ENCODE measurements at regions of chr11 and their contacts with region 1.

Region 1: GRCh38 chr11:9613118-9613829 is 39.8 kb downstream of the WEE1 start:
- DNase-seq: peak; percentile 97
- H3K4me3 ChIP-seq: peak overlapping the region; percentile 22 to 68 (median 46)
- H3K27ac ChIP-seq: peak overlapping the region; percentile 90 to 95 (median 94)
- H3K4me1 ChIP-seq: peaks cover 17 to 65% (median 49%) of the 10 kb centered on the region in 6 donors
- H3K27me3 ChIP-seq: no peaks in the 10 kb centered on the region
- CTCF ChIP-seq: peak; percentile 88 to 99 (median 97)
- POLR2A ChIP-seq: peak in 1 of 3 donors; percentile 27

Region 2: GRCh38 chr11:9534791-9535781 is 78.2 kb before region 1 on chr11:
- intact Hi-C with region 1: loop called (anchors 2 kb)
- DNase-seq: peak; percentile 91
- H3K4me3 ChIP-seq: no peak overlapping the region
- H3K27ac ChIP-seq: peak overlapping the region in 1 of 8 donors; percentile 25
- H3K4me1 ChIP-seq: peaks cover 0 to 10% (median 6%) of the 10 kb centered on the region in 6 donors
- H3K27me3 ChIP-seq: no peaks in the 10 kb centered on the region
- CTCF ChIP-seq: peak; percentile 67 to 88 (median 81)
- POLR2A ChIP-seq: no peak

Region 3: GRCh38 chr11:9663699-9664275 is 50.5 kb after region 1 on chr11 and contains the start of gene SWAP70:
- intact Hi-C with region 1: loop called (anchors 10 kb)
- DNase-seq: peak; percentile 98
- H3K4me3 ChIP-seq: peak within 1 kb of the TSS; percentile 62 to 90 (median 80)
- H3K27ac ChIP-seq: peak within 1 kb of the TSS; percentile 81 to 98 (median 95)
- H3K4me1 ChIP-seq: peaks cover 10 to 68% (median 39%) of the 10 kb centered on the region in 6 donors
- H3K27me3 ChIP-seq: no peaks in the 10 kb centered on the region
- CTCF ChIP-seq: peak in 8 of 11 experiments; percentile 31 to 57 (median 46)
- POLR2A ChIP-seq: peak in 1 of 3 donors; percentile 90
- total RNA-seq, gene SWAP70: 95.2 to 130 (median 117) TPM

Region 4: DNA sequence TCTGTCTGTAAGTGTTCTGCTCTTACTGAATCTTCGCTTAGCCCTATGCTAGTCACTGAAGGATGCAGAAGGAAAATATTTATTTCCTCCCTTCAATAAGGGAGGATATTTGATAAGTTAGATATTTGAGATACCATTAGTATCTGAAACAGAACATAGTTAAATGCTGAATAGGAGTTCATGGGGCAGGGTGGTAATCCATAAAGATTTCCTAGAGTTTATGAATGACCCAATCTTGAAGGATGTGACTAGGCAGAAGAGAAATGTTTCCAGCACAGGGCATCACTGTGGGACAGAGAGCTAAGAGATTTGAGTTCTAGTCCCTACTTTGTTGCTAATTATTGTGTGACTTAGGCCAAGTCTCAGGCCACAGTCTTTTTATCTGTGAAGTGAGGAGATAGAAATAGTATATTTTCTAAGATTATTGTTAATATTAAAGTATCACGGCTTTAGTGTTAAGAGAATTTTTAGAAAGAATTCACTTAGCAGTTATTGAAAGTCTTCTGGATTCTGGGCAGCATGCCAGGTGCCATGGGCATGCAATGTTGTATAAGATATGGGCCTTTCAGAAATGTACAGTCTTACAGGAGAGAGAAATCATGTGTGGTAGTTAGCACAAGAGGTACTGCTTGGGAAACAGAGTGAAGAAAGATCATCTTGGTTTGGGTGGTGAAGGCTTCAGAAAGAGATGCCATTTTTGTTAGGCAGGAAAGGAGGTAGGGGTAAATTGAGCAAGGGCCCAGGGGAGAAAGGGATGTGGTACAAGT is 74.6 kb after region 1 on chr11:
- intact Hi-C with region 1: no loop called
- DNase-seq: no peak
- H3K4me3 ChIP-seq: no peak overlapping the region
- H3K27ac ChIP-seq: peak overlapping the region; percentile 62 to 88 (median 77)
- H3K4me1 ChIP-seq: peaks cover 36 to 100% (median 94%) of the 10 kb centered on the region in 6 donors
- H3K27me3 ChIP-seq: no peaks in the 10 kb centered on the region
- CTCF ChIP-seq: no peak
- POLR2A ChIP-seq: no peak

Region 5: DNA sequence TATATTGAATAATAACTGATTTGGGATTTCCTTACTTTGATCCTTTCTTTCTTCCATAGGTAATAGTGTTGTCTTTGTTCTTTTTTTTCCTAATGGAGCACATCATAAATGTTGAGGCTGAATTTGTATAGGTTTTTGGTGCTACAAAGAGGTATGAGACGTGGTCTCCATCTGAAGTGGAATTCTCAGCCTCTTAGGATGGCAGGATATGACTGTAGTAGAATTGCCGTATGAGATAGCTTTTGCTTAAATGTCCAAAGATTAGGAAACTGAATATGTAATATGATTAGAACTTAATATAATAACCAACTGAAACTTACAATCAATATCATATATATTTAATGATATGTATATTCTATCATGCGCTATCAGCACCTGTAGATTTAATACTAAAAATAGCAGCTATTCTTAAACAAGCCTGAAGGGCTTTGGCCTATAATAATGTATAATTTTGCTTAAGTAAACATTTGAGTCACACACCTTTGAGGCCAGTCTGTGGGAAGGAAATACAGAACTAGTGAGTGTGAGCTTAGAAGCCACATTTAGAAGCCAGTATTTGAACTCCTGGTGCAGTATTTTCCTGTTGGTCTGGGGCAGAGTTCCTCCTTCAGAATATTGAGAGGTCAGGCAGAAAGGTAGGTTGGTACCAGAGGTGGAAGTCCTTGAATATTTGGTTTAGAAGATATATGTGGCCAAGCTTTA is 113.2 kb after region 1 on chr11:
- intact Hi-C with region 1: loop called (anchors 5 kb)
- DNase-seq: no peak
- H3K4me3 ChIP-seq: no peak overlapping the region
- H3K27ac ChIP-seq: peak overlapping the region in 7 of 8 donors; percentile 0 to 59 (median 45)
- H3K4me1 ChIP-seq: peaks cover 10 to 84% (median 34%) of the 10 kb centered on the region in 6 donors
- H3K27me3 ChIP-seq: no peaks in the 10 kb centered on the region
- CTCF ChIP-seq: no peak
- POLR2A ChIP-seq: no peak

Region 6: DNA sequence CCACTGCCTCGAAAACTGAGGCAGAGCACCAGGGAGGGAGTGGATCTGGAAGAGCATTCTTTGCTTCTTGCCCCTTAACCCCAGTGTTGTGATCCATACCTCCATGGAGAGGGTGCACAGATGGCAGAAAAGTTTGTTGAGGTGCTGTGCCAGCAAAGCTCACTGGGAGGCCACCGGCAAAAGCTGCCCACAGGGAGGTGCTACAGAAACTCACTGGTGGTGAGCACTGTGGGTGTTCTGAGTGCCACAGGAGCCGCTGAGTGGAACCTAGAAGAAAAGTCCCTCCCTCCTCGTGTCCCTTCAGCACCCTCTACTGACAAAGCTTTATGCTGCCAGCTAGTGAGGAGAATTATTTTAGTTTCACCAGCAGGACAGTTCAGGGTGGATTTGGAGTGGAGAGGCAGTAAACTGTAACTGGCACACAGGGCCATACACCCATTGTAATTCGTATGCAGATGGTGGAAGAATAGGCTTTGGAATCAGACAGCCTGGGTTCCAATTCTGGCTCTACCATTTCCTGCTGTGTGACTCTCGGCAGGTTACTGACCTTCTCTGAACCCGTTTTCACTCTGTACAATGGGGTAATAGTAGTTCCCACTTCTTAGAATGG is 135.2 kb after region 1 on chr11:
- intact Hi-C with region 1: loop called (anchors 5 kb)
- DNase-seq: no peak
- H3K4me3 ChIP-seq: no peak overlapping the region
- H3K27ac ChIP-seq: peak overlapping the region in 7 of 8 donors; percentile 54 to 81 (median 72)
- H3K4me1 ChIP-seq: peaks cover 36 to 89% (median 48%) of the 10 kb centered on the region in 6 donors
- H3K27me3 ChIP-seq: no peaks in the 10 kb centered on the region
- CTCF ChIP-seq: peak; percentile 43 to 87 (median 65)
- POLR2A ChIP-seq: no peak

Measured in spleen (tissue), 13 donors.